Activated T-helper 1 cell treated with anti-CD3 and anti-CD28 coated beads, Interleukin-12 subunit alpha, Interleukin-12 subunit beta, Interleukin-2, Interleukin-4 antibody, amounts not matched to agents 30 ng/mL and 10 ng/mL and 1 ng/mL, durations not matched to agents 14 hours and 24 hours and 36 hours (primary cell): ENCODE measurements at regions of chr14 and their contacts with region 1.

Region 1: DNA sequence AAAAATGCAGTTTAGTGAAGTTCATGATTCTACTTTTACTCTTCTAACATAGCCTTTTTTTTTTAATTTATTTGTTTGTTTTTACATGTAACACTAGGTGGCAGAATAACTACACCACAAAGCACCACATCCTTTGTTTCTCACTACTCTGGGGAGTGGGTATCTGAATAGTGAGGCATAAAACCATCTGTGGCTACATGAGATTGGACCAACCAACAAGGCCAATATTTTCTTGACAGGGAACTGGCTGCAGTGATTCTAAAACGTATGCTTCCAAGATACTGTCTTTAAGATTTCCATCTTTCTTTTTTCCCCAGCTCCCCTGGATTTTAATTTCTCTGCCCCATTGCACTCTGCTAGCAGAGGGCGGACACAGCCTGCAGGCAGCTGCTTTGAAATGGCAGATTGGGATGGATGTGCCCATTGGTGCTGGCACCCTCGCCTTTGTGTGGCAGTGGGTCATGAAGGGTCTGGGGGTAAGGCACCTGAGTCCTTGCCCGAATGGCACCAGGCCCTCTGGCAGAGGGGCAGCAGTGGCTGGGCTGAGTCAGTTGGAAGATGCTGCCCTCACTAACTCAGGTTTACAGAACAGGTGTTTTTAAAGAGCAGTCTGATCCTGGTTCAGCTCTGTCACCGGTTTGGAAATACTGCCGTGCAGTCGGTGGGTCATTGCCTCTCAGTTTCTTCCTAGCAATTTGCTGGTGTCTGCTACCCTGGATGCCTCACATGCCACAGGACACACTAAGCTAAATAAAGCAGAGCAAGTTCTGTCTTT is 429.1 kb downstream of the RAD51B start:
- DNase-seq: no peak
- H3K4me3 Mint-ChIP-seq: no peak overlapping the region
- H3K27ac Mint-ChIP-seq: no peak overlapping the region
- H3K4me1 Mint-ChIP-seq: peaks cover 41% of the 10 kb centered on the region
- H3K27me3 Mint-ChIP-seq: no peaks in the 10 kb centered on the region

Region 2: GRCh38 chr14:68210729-68211299 is 37.9 kb before region 1 on chr14:
- intact Hi-C with region 1: loop called (anchors 1 kb)
- DNase-seq: peak; percentile 55
- H3K4me3 Mint-ChIP-seq: peak overlapping the region; percentile 66
- H3K27ac Mint-ChIP-seq: peak overlapping the region; percentile 73
- H3K4me1 Mint-ChIP-seq: peaks cover 49% of the 10 kb centered on the region
- H3K27me3 Mint-ChIP-seq: no peaks in the 10 kb centered on the region

Region 3: DNA sequence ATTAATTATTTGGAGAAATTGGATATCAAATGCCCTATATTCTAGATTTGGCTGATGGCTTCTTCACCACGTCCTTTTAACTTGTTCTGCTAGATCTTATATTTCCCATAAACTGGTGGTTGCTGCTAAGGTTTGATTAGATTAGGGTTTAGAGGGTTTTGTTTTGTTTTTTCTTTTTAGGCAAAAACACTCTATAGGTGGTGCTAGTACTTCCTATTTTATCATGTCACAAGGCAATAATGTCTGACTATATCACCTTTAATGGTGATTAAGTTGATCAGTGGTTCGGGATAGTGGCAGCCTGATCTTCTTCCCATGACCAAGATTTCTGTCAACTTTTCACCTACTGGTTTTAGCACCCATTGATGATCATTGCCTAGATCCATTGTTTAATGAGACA is 26.1 kb after region 1 on chr14:
- intact Hi-C with region 1: loop called (anchors 2 kb)
- DNase-seq: no peak
- H3K4me3 Mint-ChIP-seq: no peak overlapping the region
- H3K27ac Mint-ChIP-seq: no peak overlapping the region
- H3K4me1 Mint-ChIP-seq: peaks cover 24% of the 10 kb centered on the region
- H3K27me3 Mint-ChIP-seq: no peaks in the 10 kb centered on the region

Region 4: GRCh38 chr14:68312884-68313610 is 64.4 kb after region 1 on chr14:
- intact Hi-C with region 1: no loop called
- DNase-seq: no peak
- H3K4me3 Mint-ChIP-seq: no peak overlapping the region
- H3K27ac Mint-ChIP-seq: no peak overlapping the region
- H3K4me1 Mint-ChIP-seq: peaks cover 22% of the 10 kb centered on the region
- H3K27me3 Mint-ChIP-seq: no peaks in the 10 kb centered on the region

Region 5: DNA sequence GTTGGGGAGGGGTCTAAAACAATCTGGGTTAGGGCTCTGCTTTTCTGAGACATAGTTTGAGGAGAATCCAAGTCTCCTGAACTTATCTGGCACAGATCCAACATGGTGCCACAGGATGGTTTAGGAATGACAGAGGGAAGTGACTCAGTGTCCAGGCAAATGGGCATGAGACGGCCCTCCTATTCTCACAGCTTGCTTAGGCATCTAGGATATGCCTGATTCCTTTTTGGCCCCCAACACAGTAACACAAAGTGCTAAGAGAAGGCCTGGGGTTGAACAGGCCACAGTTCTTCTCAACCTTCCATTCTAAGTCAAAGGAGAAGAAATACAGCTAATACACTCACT is 426.5 kb after region 1 on chr14:
- intact Hi-C with region 1: no loop called
- DNase-seq: no peak
- H3K4me3 Mint-ChIP-seq: no peak overlapping the region
- H3K27ac Mint-ChIP-seq: no peak overlapping the region
- H3K4me1 Mint-ChIP-seq: peaks cover 25% of the 10 kb centered on the region
- H3K27me3 Mint-ChIP-seq: no peaks in the 10 kb centered on the region

Region 6: GRCh38 chr14:68718023-68718995 is 469.6 kb after region 1 on chr14:
- intact Hi-C with region 1: loop called (anchors 5 kb)
- DNase-seq: no peak
- H3K4me3 Mint-ChIP-seq: no peak overlapping the region
- H3K27ac Mint-ChIP-seq: no peak overlapping the region
- H3K4me1 Mint-ChIP-seq: peaks cover 56% of the 10 kb centered on the region
- H3K27me3 Mint-ChIP-seq: peaks cover 2% of the 10 kb centered on the region

Region 7: GRCh38 chr14:68816262-68816942 is 567.7 kb after region 1 on chr14:
- intact Hi-C with region 1: loop called (anchors 1 kb)
- DNase-seq: peak; percentile 84
- H3K4me3 Mint-ChIP-seq: peak overlapping the region; percentile 76
- H3K27ac Mint-ChIP-seq: peak overlapping the region; percentile 90
- H3K4me1 Mint-ChIP-seq: peaks cover 58% of the 10 kb centered on the region
- H3K27me3 Mint-ChIP-seq: no peaks in the 10 kb centered on the region